PC-9 (cell line): ENCODE measurements at regions of chr7 and their contacts with region 1.

Region 1: GRCh38 chr7:26365077-26365900 is 73.6 kb downstream of the SNX10 start:
- DNase-seq: peak; percentile 57 to 74
- H3K4me3 ChIP-seq: no peak overlapping the region
- H3K27ac ChIP-seq: no peak overlapping the region
- H3K4me1 ChIP-seq: no peaks in the 10 kb centered on the region
- H3K27me3 ChIP-seq: no peaks in the 10 kb centered on the region
- CTCF ChIP-seq: peak; percentile 97

Region 2: DNA sequence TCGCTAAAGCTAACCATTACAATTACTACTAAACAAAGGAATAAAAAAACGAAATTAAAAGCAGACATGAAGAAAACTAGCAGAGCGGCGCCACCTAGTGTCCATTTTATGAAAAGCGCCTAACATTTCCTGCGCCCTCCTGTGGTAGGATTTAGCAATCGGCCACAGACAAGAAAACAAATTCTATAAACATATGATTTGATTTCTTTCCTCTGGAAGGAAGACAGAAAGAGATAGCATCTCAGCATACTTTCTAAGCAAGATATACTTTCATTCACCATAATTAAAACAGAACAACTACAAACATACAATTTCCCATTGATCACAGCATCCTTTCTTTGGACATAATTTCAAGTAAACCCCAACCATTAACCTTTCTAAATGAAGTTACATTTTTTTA is 799.3 kb before region 1 on chr7:
- CTCF ChIA-PET with region 1: no interaction called
- POLR2A ChIA-PET with region 1: no interaction called
- intact Hi-C with region 1: loop called (anchors 2 kb)
- DNase-seq: peak; percentile 66 to 67
- H3K4me3 ChIP-seq: no peak overlapping the region
- H3K27ac ChIP-seq: no peak overlapping the region
- H3K4me1 ChIP-seq: no peaks in the 10 kb centered on the region
- H3K27me3 ChIP-seq: peaks cover 45% of the 10 kb centered on the region
- CTCF ChIP-seq: peak; percentile 100

Region 3: DNA sequence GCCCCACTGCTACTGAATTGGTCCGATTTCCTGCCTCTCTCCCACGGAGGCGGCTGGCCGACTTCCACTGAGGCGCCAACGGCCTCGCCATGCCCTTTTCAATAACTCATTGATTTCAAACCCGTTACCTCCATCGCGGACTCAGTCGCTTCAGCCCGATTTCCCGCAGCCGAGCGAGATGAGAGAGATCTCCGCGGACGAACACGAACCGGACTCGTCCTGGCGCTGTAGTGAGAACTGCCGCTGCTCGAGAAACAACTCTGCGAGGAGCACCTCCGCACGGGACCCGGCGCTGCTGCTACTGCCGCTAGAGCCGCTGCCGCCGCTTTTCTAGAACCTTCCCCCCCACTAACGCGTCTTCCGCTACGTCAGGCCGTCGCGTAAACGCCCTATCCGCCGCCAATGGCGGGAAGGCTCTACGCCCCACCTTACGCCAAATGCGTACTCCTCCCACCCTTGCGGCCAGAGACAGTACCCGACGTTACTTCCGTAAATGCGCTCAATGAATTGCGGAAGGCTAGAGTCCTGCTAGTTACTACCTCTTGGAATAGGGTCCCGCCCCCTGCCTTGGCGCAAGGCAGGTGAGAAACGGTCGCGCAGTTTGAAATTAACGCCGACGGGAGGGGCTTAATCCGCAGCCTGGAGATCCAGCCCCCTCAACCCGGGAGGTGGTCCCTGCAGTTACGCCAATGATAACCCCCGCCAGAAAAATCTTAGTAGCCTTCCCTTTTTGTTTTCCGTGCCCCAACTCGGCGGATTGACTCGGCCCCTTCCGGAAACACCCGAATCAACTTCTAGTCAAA is 164.6 kb before region 1 on chr7 and contains the start of gene HNRNPA2B1:
- CTCF ChIA-PET with region 1: interaction called, 5 read pairs
- POLR2A ChIA-PET with region 1: no interaction called
- intact Hi-C with region 1: loop called (anchors 2 kb)
- DNase-seq: peak; percentile 99
- H3K4me3 ChIP-seq: peak within 1 kb of the TSS; percentile 98
- H3K27ac ChIP-seq: peak within 1 kb of the TSS; percentile 92
- H3K4me1 ChIP-seq: peaks cover 45% of the 10 kb centered on the region
- H3K27me3 ChIP-seq: no peaks in the 10 kb centered on the region
- CTCF ChIP-seq: no peak
- total RNA-seq, gene HNRNPA2B1: 526 and 792 TPM in 2 replicates

Region 4: DNA sequence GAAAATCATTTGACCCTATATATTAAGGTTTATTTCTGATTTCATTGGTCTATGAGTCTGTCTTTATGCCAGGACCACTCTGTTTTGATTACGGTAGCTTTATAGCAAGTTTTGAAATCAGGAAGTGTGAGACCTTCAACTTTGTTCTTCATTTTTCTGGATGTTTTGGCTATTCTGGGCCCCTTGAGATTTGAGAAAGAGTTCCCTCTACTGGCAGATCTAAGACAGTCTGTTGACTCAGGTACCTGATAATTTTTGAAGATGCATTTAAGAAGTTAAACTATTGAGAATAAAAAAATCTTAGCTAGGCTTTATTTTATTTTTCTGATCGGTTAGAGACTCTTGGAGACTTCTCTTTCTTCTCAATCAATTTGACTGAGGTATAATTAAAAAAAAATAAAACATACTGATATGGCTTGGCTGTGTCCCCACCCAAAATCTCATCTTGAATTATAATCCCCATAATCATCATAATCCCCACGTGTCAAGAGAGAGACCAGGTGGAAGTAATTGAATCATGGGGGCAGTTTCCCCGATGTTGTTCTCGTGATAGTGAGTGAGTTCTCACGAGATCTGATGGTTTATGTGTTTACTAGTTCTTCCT is 135.6 kb after region 1 on chr7:
- CTCF ChIA-PET with region 1: interaction called, 6 read pairs
- POLR2A ChIA-PET with region 1: no interaction called
- intact Hi-C with region 1: loop called (anchors 2 kb)
- DNase-seq: peak in 1 of 2 experiments; percentile 48
- H3K4me3 ChIP-seq: no peak overlapping the region
- H3K27ac ChIP-seq: no peak overlapping the region
- H3K4me1 ChIP-seq: no peaks in the 10 kb centered on the region
- H3K27me3 ChIP-seq: no peaks in the 10 kb centered on the region
- CTCF ChIP-seq: peak; percentile 73

Region 5: GRCh38 chr7:26563406-26563805 is 198.1 kb after region 1 on chr7:
- CTCF ChIA-PET with region 1: no interaction called
- POLR2A ChIA-PET with region 1: no interaction called
- intact Hi-C with region 1: no loop called
- DNase-seq: no peak
- H3K4me3 ChIP-seq: no peak overlapping the region
- H3K27ac ChIP-seq: no peak overlapping the region
- H3K4me1 ChIP-seq: peaks cover 8% of the 10 kb centered on the region
- H3K27me3 ChIP-seq: no peaks in the 10 kb centered on the region
- CTCF ChIP-seq: no peak

Region 6: DNA sequence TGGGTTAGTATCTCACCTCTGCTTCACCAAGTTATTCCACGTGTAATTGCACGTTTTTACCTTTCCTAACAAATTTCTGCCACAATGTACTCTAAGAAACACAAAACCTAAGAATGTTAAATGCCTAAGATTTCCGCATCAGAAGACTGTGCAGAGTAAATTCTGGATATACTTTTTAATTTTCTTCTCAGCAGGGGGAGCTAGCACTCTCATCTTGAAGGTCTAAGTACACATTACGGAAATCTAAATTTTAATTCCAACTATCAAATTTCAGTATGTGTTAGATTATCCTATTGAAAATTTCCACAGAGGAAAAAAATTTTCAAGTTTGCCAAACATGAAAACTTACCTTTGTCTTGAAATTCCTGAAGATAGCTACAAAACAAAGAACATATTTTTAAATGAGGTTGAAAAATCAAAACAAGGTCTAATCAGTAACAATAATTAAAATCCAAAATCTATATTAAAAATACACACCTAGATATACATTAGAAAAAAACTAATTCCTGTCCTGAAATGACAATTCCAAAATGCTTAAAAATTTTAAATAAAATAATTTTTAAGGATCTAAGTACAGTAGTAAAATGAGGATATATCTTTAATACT is 488.6 kb after region 1 on chr7:
- CTCF ChIA-PET with region 1: no interaction called
- POLR2A ChIA-PET with region 1: interaction called, 6 read pairs
- intact Hi-C with region 1: loop called (anchors 5 kb)
- DNase-seq: peak in 1 of 2 experiments; percentile 60
- H3K4me3 ChIP-seq: no peak overlapping the region
- H3K27ac ChIP-seq: no peak overlapping the region
- H3K4me1 ChIP-seq: peaks cover 24% of the 10 kb centered on the region
- H3K27me3 ChIP-seq: no peaks in the 10 kb centered on the region
- CTCF ChIP-seq: peak; percentile 90

Region 7: GRCh38 chr7:28020302-28020940 is 1655.1 kb after region 1 on chr7:
- CTCF ChIA-PET with region 1: no interaction called
- POLR2A ChIA-PET with region 1: no interaction called
- intact Hi-C with region 1: loop called (anchors 10 kb)
- DNase-seq: peak; percentile 66 to 69
- H3K4me3 ChIP-seq: no peak overlapping the region
- H3K27ac ChIP-seq: no peak overlapping the region
- H3K4me1 ChIP-seq: peaks cover 8% of the 10 kb centered on the region; the same call in 1 of the 2 replicates
- H3K27me3 ChIP-seq: no peaks in the 10 kb centered on the region
- CTCF ChIP-seq: peak; percentile 96